ENCODE measurements at regions of chr7 and their contacts with region 1.

Region 1: DNA sequence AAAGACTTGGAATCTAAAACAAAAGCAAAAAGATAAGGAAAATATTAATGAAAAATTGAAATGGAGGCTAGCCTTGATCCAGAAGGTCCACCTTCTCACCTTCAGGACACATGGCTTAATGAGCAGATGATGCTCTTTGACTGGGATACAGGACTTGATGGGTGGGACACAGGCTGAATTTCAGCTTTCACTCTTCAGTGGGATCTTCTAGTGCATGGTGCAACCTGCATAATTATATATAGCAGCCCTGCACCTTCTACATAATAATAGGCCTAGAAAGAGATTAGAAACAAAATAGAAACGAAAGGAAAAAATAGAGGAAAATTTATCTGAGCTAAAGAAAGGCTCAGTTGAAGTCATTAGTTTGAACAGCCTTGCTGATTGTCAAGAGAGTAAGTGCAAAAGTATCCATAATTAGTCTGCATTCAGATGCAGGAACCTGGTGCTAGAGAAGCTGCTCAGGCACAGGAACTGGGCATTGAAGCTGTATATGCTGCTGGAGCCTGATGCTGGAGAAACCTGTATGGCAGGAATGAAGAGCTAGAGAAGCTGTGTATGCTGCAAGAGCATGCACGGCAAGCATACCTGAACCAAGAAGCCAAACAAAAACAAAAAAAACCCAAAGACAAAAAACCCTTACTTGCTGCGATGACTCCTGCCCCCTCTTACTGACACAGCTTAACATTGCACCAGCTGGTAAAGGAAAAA is 19.4 kb downstream of the MKLN1 start:
- DNase-seq: no peak
- ATAC-seq: peak; percentile 34
- H3K4me3 ChIP-seq: no peak overlapping the region
- H3K27ac ChIP-seq: no peak overlapping the region
- H3K4me1 ChIP-seq: no peaks in the 10 kb centered on the region
- H3K27me3 ChIP-seq: no peaks in the 10 kb centered on the region
- CTCF ChIP-seq: no peak
- EP300 ChIP-seq: no peak
- POLR2A ChIP-seq: no peak
- RAD21 ChIP-seq: no peak

Region 2: DNA sequence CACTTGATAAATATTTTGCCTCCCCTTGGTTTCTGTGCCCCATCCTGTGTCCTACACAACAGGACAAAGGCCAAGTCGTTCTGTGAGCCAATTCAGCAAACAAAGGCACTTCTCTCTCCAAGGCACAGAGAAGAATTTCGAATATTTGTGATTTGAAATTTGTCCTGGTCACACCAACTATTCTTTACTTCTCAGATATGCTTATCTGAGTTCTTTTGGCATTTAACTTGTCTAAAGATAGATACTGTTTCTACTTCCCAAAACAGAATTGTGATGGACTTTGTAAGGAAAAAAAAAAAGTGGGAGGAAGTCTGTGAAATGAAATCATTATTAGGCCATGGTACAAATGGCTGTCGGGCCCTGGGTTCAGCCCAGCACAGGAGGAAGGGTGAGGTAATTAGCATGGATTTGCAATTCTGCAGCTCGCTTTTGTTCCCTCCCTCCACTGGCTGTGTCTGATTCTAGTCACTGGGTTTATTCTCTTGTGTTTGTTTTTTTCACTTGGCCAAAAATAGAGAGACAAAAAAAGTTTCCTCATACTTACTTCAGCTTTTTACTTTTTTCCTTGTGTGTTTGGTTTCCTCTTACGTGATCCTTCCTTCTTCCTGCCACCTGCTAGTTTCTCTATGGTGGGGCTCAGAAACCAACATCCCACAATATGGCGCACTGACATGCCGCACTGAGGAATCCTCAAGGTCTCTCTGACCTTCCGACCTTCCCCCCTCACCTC is 127.6 kb before region 1 on chr7:
- CTCF ChIA-PET with region 1: no interaction called
- POLR2A ChIA-PET with region 1: no interaction called
- RAD21 ChIA-PET with region 1: no interaction called
- SMC1A ChIA-PET with region 1: no interaction called
- in situ Hi-C with region 1: no loop called
- intact Hi-C with region 1: no loop called
- DNase-seq: no peak
- ATAC-seq: peak; percentile 64
- H3K4me3 ChIP-seq: no peak overlapping the region
- H3K27ac ChIP-seq: peak overlapping the region; percentile 24
- H3K4me1 ChIP-seq: peaks cover 18% of the 10 kb centered on the region
- H3K27me3 ChIP-seq: no peaks in the 10 kb centered on the region
- CTCF ChIP-seq: no peak
- EP300 ChIP-seq: peak in 1 of 2 experiments; percentile 25; a peak in 1 of 4 replicates
- POLR2A ChIP-seq: no peak
- RAD21 ChIP-seq: no peak

Region 3: GRCh38 chr7:131336956-131337355 is 10.1 kb before region 1 on chr7:
- CTCF ChIA-PET with region 1: interaction called, 7 read pairs
- POLR2A ChIA-PET with region 1: interaction called, 4 read pairs
- RAD21 ChIA-PET with region 1: interaction called, 3 read pairs
- SMC1A ChIA-PET with region 1: interaction called, 25 read pairs
- in situ Hi-C with region 1: no loop called
- intact Hi-C with region 1: no loop called
- DNase-seq: no peak
- ATAC-seq: no peak
- H3K4me3 ChIP-seq: no peak overlapping the region
- H3K27ac ChIP-seq: no peak overlapping the region
- H3K4me1 ChIP-seq: no peaks in the 10 kb centered on the region
- H3K27me3 ChIP-seq: no peaks in the 10 kb centered on the region
- CTCF ChIP-seq: no peak
- EP300 ChIP-seq: no peak
- POLR2A ChIP-seq: no peak
- RAD21 ChIP-seq: no peak

Region 4: GRCh38 chr7:131381069-131381838 is 34.2 kb after region 1 on chr7:
- CTCF ChIA-PET with region 1: no interaction called
- POLR2A ChIA-PET with region 1: no interaction called
- RAD21 ChIA-PET with region 1: no interaction called
- SMC1A ChIA-PET with region 1: no interaction called
- in situ Hi-C with region 1: no loop called
- intact Hi-C with region 1: no loop called
- DNase-seq: no peak
- ATAC-seq: no peak
- H3K4me3 ChIP-seq: no peak overlapping the region
- H3K27ac ChIP-seq: no peak overlapping the region
- H3K4me1 ChIP-seq: no peaks in the 10 kb centered on the region
- H3K27me3 ChIP-seq: no peaks in the 10 kb centered on the region
- CTCF ChIP-seq: no peak
- EP300 ChIP-seq: no peak
- POLR2A ChIP-seq: no peak
- RAD21 ChIP-seq: no peak